H1 (cell line): ENCODE measurements at regions of chr7 and their contacts with region 1.

Region 1: DNA sequence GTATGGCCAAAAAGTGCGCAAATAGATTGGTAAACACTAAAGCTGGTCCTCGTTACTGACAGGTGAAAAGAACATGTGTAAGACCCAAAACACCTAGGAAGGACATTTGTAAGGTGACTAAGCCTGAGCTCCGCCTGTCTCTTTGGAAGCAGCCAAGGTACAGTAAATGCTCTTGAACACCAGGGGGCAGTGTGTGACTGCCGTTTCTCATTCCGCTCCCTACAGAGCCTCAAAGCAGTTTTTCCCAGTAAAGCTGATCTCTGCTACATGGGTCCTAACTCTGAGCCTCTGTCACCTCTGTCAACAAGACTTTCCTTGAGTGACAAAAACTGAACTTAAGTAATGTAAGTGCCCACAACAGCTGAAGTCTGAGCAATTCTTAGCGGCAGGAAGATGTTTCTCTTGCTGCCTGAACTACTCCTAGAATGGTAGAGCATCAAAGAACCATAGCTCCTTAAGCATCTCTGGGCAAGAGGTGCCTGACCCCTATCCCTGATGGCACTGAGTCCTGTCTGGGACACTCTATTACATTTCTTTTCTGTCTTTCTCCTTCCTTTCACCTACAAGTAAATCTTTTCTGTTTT is 238.0 kb upstream of the INHBA start:
- DNase-seq: peak in 1 of 2 experiments; percentile 78
- H3K4me3 ChIP-seq: no peak overlapping the region
- H3K27ac ChIP-seq: no peak overlapping the region
- H3K4me1 ChIP-seq: peaks cover 0 to 7% (median 5%) of the 10 kb centered on the region in 4 experiments; a peak in 3 of 7 replicates
- H3K27me3 ChIP-seq: peaks cover 0 to 4% (median 3%) of the 10 kb centered on the region in 4 experiments; a peak in 3 of 7 replicates
- CTCF ChIP-seq: peak; percentile 70 to 95 (median 84)
- EP300 ChIP-seq: no peak
- POLR2A ChIP-seq: no peak
- RAD21 ChIP-seq: peak; percentile 93 to 94

Region 2: GRCh38 chr7:41930538-41931262 is 10.2 kb before region 1 on chr7:
- CTCF ChIA-PET with region 1: interaction called, 17 read pairs
- POLR2A ChIA-PET with region 1: no interaction called
- DNase-seq: no peak
- H3K4me3 ChIP-seq: no peak overlapping the region
- H3K27ac ChIP-seq: no peak overlapping the region
- H3K4me1 ChIP-seq: no peaks in the 10 kb centered on the region; a peak in 1 of 7 replicates
- H3K27me3 ChIP-seq: no peaks in the 10 kb centered on the region
- CTCF ChIP-seq: no peak
- EP300 ChIP-seq: no peak
- POLR2A ChIP-seq: no peak
- RAD21 ChIP-seq: no peak

Region 3: DNA sequence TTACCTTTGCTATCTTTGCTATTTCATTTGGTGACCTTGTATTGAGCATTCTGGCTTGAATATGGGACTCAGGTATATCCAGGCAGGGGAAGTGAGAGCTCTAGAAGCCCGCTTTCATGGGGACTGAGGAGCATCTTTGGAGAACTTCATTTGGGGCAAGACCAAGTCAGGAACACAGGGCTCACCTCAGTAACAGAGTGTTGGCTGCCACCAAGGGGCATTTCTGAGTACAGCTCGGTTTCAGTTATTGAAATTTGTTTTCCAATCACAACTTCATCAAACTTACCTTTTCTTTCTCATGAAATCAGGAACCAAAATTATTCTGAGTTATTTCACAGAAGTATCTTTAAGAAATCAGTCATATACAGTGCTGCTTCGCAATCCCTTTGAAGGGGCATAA is 633.8 kb after region 1 on chr7:
- CTCF ChIA-PET with region 1: interaction called, 40 read pairs
- POLR2A ChIA-PET with region 1: no interaction called
- DNase-seq: no peak
- H3K4me3 ChIP-seq: no peak overlapping the region
- H3K27ac ChIP-seq: no peak overlapping the region
- H3K4me1 ChIP-seq: no peaks in the 10 kb centered on the region
- H3K27me3 ChIP-seq: no peaks in the 10 kb centered on the region
- CTCF ChIP-seq: peak in 2 of 3 experiments; percentile 46 to 52; a peak in 3 of 4 replicates
- EP300 ChIP-seq: no peak
- POLR2A ChIP-seq: no peak
- RAD21 ChIP-seq: peak; percentile 73 to 78

Region 4: GRCh38 chr7:42690794-42691639 is 750.2 kb after region 1 on chr7:
- CTCF ChIA-PET with region 1: interaction called, 55 read pairs
- POLR2A ChIA-PET with region 1: no interaction called
- DNase-seq: peak in 1 of 2 experiments; percentile 52
- H3K4me3 ChIP-seq: no peak overlapping the region
- H3K27ac ChIP-seq: no peak overlapping the region
- H3K4me1 ChIP-seq: peaks cover 2 to 14% (median 5%) of the 10 kb centered on the region in 4 experiments; a peak in 6 of 7 replicates
- H3K27me3 ChIP-seq: peaks cover 0 to 5% (median 0%) of the 10 kb centered on the region in 4 experiments; a peak in 3 of 7 replicates
- CTCF ChIP-seq: peak; percentile 19 to 82 (median 65)
- EP300 ChIP-seq: no peak
- POLR2A ChIP-seq: no peak
- RAD21 ChIP-seq: peak; percentile 92 to 94

Region 5: DNA sequence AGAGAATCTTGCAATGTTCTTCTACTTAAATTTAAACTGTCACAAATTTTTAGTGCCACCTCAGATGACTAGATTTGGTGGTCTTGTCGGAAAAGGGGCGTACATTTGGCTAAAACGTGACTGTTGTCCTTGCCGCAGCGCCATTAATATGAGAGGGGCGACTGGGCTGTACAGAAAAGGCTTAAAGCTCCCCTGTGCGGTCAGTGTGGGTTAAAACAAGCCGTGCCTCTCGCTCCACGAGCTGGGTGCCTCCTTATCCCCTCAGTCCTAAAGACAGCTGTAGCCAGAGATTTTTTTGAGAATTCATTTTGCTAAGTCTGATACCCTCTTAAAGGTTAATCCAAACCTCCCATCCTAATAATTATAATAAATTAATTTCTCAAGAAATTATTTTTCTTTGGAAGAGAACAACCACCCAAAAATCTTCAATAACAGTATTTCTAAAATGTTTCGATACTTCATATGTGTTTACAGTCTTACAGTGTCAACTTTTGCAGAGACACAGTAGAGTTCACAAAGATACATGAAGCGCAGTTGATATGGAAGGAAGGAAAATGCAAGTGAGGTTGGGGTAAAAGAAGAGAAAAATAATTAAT is 902.5 kb after region 1 on chr7:
- CTCF ChIA-PET with region 1: interaction called, 12 read pairs
- POLR2A ChIA-PET with region 1: no interaction called
- DNase-seq: no peak
- H3K4me3 ChIP-seq: no peak overlapping the region
- H3K27ac ChIP-seq: no peak overlapping the region
- H3K4me1 ChIP-seq: no peaks in the 10 kb centered on the region
- H3K27me3 ChIP-seq: no peaks in the 10 kb centered on the region
- CTCF ChIP-seq: peak; percentile 62 to 74 (median 65)
- EP300 ChIP-seq: no peak
- POLR2A ChIP-seq: no peak
- RAD21 ChIP-seq: peak; percentile 82 to 87